Naive thymus-derived CD8-positive, alpha-beta T cell (primary cell): ENCODE measurements at regions of chr6 and their contacts with region 1.

Region 1: GRCh38 chr6:10694302-10695085 is at the starts of genes C6orf52 and PAK1IP1:
- DNase-seq: peak; percentile 80 to 99 (median 94)
- ATAC-seq: peak; percentile 92 to 93
- H3K4me3 Mint-ChIP-seq: peak within 1 kb of the TSS; percentile 93 to 100 (median 98)
- H3K27ac Mint-ChIP-seq: peak within 1 kb of the TSS; percentile 100
- H3K4me1 Mint-ChIP-seq: peaks cover 14 to 50% (median 47%) of the 10 kb centered on the region in 4 donors
- H3K27me3 Mint-ChIP-seq: peaks cover 0 to 6% (median 0%) of the 10 kb centered on the region in 5 donors
- polyA plus RNA-seq, gene C6orf52: 0.60 to 1.0 TPM in 2 of 3 donors, not detected in the other
- polyA plus RNA-seq, gene PAK1IP1: 17.6 to 26.9 (median 22.4) TPM

Region 2: DNA sequence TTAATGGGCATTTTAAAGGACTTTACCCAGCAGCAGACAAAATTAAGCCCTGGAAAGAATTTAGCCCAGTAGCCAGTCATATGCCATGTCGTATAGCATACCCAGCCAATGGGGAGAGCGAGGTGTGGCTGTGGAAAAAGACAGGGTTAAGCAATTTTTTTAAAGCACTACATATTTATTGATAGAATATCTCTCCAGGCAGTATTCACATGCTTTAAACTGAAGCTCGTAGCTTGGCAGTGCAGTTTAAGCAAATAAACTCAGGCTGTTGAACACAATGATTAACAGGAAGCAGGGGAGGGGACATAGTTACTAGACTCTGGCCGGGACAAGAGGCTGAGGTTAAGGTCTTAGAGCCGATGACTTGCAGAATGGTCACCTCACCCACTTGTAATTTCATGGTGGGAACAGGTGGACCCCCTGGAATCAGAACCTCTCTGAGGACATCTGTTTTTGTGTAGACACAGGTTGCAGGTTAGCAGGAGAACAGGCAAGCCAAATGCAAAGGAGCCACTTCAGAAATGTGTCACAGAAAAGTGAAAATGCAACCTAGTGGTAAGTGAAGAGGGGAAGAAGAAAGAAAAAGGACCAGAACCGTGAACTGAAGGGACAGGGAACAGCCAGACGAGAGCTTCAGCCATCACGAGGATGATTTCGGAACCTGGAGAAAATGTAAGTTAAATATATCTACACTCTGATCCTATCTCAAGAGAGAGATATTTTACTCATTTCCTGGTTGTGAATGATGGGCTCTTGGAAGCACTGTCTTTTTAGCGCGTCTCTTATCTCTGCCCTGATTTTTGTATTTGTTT is 166.1 kb before region 1 on chr6:
- POLR2A ChIA-PET with region 1: interaction called, 13 read pairs
- DNase-seq: peak in 5 of 10 donors; percentile 15 to 35 (median 24)
- ATAC-seq: peak; percentile 62 to 70
- H3K4me3 Mint-ChIP-seq: peak overlapping the region; percentile 85 to 99 (median 94)
- H3K27ac Mint-ChIP-seq: peak overlapping the region; percentile 77 to 98 (median 91)
- H3K4me1 Mint-ChIP-seq: peaks cover 15 to 51% (median 45%) of the 10 kb centered on the region in 4 donors
- H3K27me3 Mint-ChIP-seq: peaks cover 0 to 5% (median 2%) of the 10 kb centered on the region in 5 donors

Region 3: GRCh38 chr6:10655508-10656055 is 38.9 kb before region 1 on chr6:
- POLR2A ChIA-PET with region 1: no interaction called
- DNase-seq: peak in 3 of 10 donors; percentile 2 to 39 (median 31)
- ATAC-seq: peak in 1 of 2 donors; percentile 76
- H3K4me3 Mint-ChIP-seq: peak overlapping the region in 6 of 10 donors; percentile 12 to 47 (median 26)
- H3K27ac Mint-ChIP-seq: peak overlapping the region in 1 of 10 donors; percentile 7
- H3K4me1 Mint-ChIP-seq: peaks cover 4 to 14% (median 10%) of the 10 kb centered on the region in 4 donors
- H3K27me3 Mint-ChIP-seq: peaks cover 0 to 29% (median 6%) of the 10 kb centered on the region in 5 donors

Region 4: DNA sequence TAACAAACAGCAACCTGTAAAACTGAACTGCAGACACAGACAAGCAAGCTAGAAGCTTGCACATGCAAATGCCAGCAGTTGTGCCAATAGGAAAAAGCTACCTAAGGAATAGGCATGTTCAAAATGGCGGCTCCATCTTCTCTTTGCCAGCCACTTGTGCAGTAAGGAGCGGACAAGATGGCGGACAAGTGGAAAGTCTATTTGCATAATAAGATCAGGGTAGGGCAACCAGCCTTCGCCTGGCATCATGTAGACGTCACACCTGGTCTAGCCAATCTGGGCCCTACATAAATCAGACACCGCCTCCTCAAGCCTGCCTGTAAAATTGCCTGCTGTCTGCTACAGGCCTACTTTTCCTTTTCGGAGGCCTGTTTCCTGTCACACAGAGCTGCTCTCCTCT is 18.1 kb before region 1 on chr6:
- POLR2A ChIA-PET with region 1: no interaction called
- DNase-seq: no peak
- ATAC-seq: no peak
- H3K4me3 Mint-ChIP-seq: no peak overlapping the region
- H3K27ac Mint-ChIP-seq: no peak overlapping the region
- H3K4me1 Mint-ChIP-seq: no peaks in the 10 kb centered on the region
- H3K27me3 Mint-ChIP-seq: peaks cover 0 to 5% (median 0%) of the 10 kb centered on the region in 5 donors

Region 5: GRCh38 chr6:10747251-10747972 is 52.9 kb after region 1 on chr6 and contains the start of gene TMEM14B:
- POLR2A ChIA-PET with region 1: interaction called, 32 read pairs
- DNase-seq: peak; percentile 96 to 100 (median 99)
- ATAC-seq: peak; percentile 95 to 96
- H3K4me3 Mint-ChIP-seq: peak within 1 kb of the TSS; percentile 75 to 99 (median 92)
- H3K27ac Mint-ChIP-seq: peak within 1 kb of the TSS; percentile 96 to 99 (median 98)
- H3K4me1 Mint-ChIP-seq: peaks cover 21 to 64% (median 49%) of the 10 kb centered on the region in 4 donors
- H3K27me3 Mint-ChIP-seq: no peaks in the 10 kb centered on the region
- polyA plus RNA-seq, gene TMEM14B: 194 to 241 (median 212) TPM